CD8-positive, alpha-beta memory T cell (primary cell): ENCODE measurements at regions of chr1 and their contacts with region 1.

Region 1: DNA sequence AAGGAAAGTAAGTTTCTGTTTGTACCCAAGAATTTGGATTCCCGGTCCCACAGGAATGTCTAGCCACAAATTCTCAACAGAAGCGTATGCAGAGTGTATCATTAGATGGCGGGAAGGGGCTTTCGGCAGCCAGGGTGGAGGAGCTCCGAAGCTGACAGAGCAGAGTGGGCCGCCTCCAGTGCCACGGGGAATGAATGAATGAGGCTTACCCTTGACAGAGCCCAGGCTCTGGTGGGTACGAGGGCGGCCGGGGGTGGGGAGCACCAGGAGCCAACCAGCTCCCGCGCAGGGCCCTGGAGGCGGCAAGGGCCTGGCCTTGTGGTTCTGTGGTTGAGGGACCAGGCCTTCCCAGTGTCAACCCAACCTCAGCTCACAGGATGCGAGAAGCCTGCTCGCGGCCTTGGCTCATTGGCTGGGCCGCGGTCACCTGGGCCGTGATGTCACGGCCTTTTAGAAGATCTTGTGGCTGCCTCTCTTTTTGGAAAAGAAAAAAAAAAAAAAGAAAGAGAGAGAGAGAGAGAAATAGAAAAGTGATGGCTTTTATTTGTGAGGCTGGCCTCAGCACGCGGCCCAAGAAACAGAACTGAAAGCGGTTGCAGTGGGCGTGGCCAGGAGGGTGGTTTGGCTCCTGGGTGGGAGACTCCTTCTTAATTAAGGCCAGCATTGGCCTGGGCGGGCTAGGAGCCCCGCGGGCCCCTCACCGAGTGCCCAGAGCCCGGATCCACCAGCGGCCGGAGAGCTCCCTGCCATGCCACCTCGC is 34.9 kb upstream of the RUNX3 start:
- DNase-seq: peak; percentile 82 to 98 (median 93)
- H3K4me3 ChIP-seq: peak overlapping the region; percentile 53
- H3K4me3 Mint-ChIP-seq: peak overlapping the region; percentile 77 to 94 (median 88)
- H3K27ac ChIP-seq: peak overlapping the region; percentile 60
- H3K27ac Mint-ChIP-seq: peak overlapping the region; percentile 91 to 98 (median 95)
- H3K4me1 ChIP-seq: peaks cover 54% of the 10 kb centered on the region
- H3K4me1 Mint-ChIP-seq: peaks cover 65 to 80% (median 69%) of the 10 kb centered on the region in 3 donors
- H3K27me3 ChIP-seq: no peaks in the 10 kb centered on the region
- H3K27me3 Mint-ChIP-seq: peaks cover 0 to 3% of the 10 kb centered on the region in 2 donors

Region 2: DNA sequence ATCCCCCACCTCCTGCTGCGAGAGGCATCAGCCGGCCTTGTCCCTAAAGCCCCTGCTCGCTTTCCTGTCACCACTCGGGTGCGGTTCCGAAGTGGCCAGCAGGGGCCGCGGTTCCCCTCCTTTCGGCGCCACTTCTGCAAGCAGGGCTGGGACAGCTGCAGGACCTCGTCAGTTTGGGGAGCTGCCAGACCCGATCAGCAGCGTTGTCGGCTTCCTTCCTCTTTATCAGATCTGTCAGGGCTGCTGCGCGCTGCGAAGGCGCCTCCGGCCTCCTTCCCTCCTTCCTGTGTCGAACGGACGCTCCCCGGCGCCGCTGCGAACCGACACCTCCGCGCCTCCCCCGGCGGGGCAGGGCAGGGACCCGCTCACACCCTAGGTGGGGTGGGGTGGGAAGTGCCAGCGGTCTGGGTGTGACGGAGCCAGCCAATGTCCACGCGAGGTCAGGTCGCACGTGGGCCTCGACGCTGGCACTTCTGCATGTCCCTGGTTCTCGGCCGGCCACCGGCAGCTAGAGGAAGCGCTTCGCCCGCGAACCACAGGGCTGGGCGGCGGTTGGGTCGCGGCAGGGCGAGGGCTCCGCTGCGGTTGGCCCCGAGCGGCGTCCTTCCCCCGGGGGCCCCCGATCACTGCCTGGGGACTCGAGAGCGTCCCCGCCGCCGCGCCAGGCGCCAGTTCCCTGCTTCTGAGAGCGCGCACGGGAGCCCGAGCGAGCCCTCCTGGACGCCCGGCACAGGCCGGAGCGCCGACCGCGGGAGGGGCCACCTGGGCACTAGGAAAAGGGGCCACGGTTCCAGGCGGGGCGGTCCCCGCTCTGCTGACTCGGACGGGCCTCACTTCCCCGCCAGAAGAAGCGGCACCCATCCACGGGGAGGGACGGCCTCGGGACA is 116.8 kb before region 1 on chr1:
- CTCF ChIA-PET with region 1: interaction called, 13 read pairs
- POLR2A ChIA-PET with region 1: interaction called, 3 read pairs
- DNase-seq: peak; percentile 82 to 95 (median 86)
- H3K4me3 ChIP-seq: peak overlapping the region; percentile 48
- H3K4me3 Mint-ChIP-seq: peak overlapping the region; percentile 66 to 84 (median 74)
- H3K27ac ChIP-seq: peak overlapping the region; percentile 27
- H3K27ac Mint-ChIP-seq: peak overlapping the region; percentile 73 to 95 (median 82)
- H3K4me1 ChIP-seq: peaks cover 4% of the 10 kb centered on the region
- H3K4me1 Mint-ChIP-seq: peaks cover 24 to 37% (median 25%) of the 10 kb centered on the region in 3 donors
- H3K27me3 ChIP-seq: no peaks in the 10 kb centered on the region
- H3K27me3 Mint-ChIP-seq: peaks cover 0 to 1% of the 10 kb centered on the region in 2 donors

Region 3: DNA sequence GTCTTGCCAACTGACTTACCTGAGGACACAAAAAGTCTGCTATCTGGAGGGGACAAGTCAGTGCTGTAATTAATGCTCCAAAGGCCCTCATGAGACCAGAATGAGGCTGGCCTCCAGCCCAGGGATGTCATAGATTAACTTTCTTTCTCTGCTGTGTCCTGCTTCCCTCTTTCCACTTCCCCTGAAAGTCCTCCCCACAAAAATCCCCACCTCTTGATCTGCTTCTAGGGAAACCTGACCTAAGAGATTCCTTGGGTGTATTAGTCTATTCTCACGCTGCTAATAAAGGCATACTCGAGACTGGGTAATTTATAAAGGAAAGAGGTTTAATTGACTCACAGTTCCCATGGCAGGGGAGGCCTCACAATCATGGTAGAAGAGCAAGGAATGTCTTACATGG is 74.1 kb before region 1 on chr1:
- CTCF ChIA-PET with region 1: no interaction called
- POLR2A ChIA-PET with region 1: no interaction called
- DNase-seq: no peak
- H3K4me3 ChIP-seq: no peak overlapping the region
- H3K4me3 Mint-ChIP-seq: peak overlapping the region in 1 of 7 donors; percentile 68
- H3K27ac ChIP-seq: no peak overlapping the region
- H3K27ac Mint-ChIP-seq: peak overlapping the region in 1 of 8 donors; percentile 38
- H3K4me1 ChIP-seq: no peaks in the 10 kb centered on the region
- H3K4me1 Mint-ChIP-seq: peaks cover 2 to 4% (median 3%) of the 10 kb centered on the region in 3 donors
- H3K27me3 ChIP-seq: no peaks in the 10 kb centered on the region
- H3K27me3 Mint-ChIP-seq: peaks cover 0 to 1% of the 10 kb centered on the region in 2 donors

Region 4: GRCh38 chr1:24946861-24947658 is 17.9 kb before region 1 on chr1:
- CTCF ChIA-PET with region 1: interaction called, 34 read pairs
- POLR2A ChIA-PET with region 1: interaction called, 12 read pairs
- DNase-seq: no peak
- H3K4me3 ChIP-seq: no peak overlapping the region
- H3K4me3 Mint-ChIP-seq: peak overlapping the region in 1 of 7 donors; percentile 31
- H3K27ac ChIP-seq: no peak overlapping the region
- H3K27ac Mint-ChIP-seq: peak overlapping the region in 6 of 8 donors; percentile 23 to 78 (median 68)
- H3K4me1 ChIP-seq: peaks cover 9% of the 10 kb centered on the region
- H3K4me1 Mint-ChIP-seq: peaks cover 34 to 81% (median 48%) of the 10 kb centered on the region in 3 donors
- H3K27me3 ChIP-seq: no peaks in the 10 kb centered on the region
- H3K27me3 Mint-ChIP-seq: peaks cover 0 to under 1% of the 10 kb centered on the region in 2 donors

Region 5: GRCh38 chr1:24987875-24988557 is 23.0 kb after region 1 on chr1:
- CTCF ChIA-PET with region 1: interaction called, 55 read pairs
- POLR2A ChIA-PET with region 1: interaction called, 17 read pairs
- DNase-seq: peak in 1 of 5 donors; percentile 30
- H3K4me3 ChIP-seq: no peak overlapping the region
- H3K4me3 Mint-ChIP-seq: peak overlapping the region in 3 of 7 donors; percentile 8 to 58 (median 57)
- H3K27ac ChIP-seq: no peak overlapping the region
- H3K27ac Mint-ChIP-seq: peak overlapping the region in 7 of 8 donors; percentile 32 to 93 (median 68)
- H3K4me1 ChIP-seq: peaks cover 99% of the 10 kb centered on the region
- H3K4me1 Mint-ChIP-seq: peaks cover 88 to 96% (median 94%) of the 10 kb centered on the region in 3 donors
- H3K27me3 ChIP-seq: no peaks in the 10 kb centered on the region
- H3K27me3 Mint-ChIP-seq: peaks cover 0 to 4% of the 10 kb centered on the region in 2 donors

Region 6: DNA sequence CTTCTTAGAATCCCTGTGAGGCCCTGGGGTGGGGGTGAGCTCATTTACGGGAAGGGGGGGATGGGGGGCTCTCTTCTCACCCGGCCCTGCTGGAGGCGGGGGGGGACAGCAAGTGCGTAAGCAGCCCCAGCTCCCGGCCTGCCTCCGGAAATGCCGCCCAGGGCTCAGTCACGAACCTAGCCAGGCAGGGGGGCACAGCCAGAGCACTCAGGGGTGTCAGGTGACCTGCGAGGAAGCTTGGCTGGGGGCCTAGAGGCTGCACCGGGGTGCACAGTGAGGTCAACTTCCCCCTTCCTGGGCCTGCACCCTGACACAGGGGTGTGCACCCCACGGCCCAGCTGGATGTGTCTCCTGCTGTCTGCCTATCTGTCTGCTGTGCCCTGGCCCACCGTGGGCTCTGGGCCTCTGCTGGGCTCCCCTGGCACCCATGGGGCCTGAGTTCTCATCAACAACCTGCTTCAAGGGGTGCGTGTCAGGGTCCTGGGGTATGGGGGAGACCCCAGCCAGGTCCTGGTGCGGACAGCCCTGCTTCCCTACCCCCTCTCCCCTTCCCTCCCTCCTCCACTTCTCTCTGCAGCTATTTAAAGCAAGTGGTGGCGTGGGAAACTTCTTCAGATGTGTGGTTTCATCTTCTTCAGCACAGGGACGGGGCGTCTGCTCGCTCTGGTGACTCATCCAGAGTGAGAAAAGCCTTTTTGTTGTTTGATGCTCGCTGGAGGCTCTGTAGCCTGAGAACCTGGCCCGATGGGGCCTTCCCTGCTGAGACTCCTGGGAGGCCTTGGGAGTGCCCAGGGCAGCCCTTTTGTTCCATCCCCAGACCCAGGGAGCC is 57.6 kb after region 1 on chr1:
- CTCF ChIA-PET with region 1: interaction called, 47 read pairs
- POLR2A ChIA-PET with region 1: interaction called, 36 read pairs
- DNase-seq: peak; percentile 93 to 99 (median 96)
- H3K4me3 ChIP-seq: peak overlapping the region; percentile 58
- H3K4me3 Mint-ChIP-seq: peak overlapping the region; percentile 48 to 84 (median 75)
- H3K27ac ChIP-seq: peak overlapping the region; percentile 97
- H3K27ac Mint-ChIP-seq: peak overlapping the region; percentile 89 to 100 (median 98)
- H3K4me1 ChIP-seq: peaks cover 79% of the 10 kb centered on the region
- H3K4me1 Mint-ChIP-seq: peaks cover 66 to 81% (median 75%) of the 10 kb centered on the region in 3 donors
- H3K27me3 ChIP-seq: no peaks in the 10 kb centered on the region
- H3K27me3 Mint-ChIP-seq: no peaks in the 10 kb centered on the region

Region 7: GRCh38 chr1:25042331-25043227 is 77.6 kb after region 1 on chr1:
- CTCF ChIA-PET with region 1: interaction called, 205 read pairs
- POLR2A ChIA-PET with region 1: interaction called, 12 read pairs
- DNase-seq: peak in 1 of 5 donors; percentile 41
- H3K4me3 ChIP-seq: no peak overlapping the region
- H3K4me3 Mint-ChIP-seq: peak overlapping the region in 1 of 7 donors; percentile 49
- H3K27ac ChIP-seq: no peak overlapping the region
- H3K27ac Mint-ChIP-seq: peak overlapping the region in 2 of 8 donors; percentile 55 to 65
- H3K4me1 ChIP-seq: peaks cover 10% of the 10 kb centered on the region
- H3K4me1 Mint-ChIP-seq: peaks cover 29 to 48% (median 33%) of the 10 kb centered on the region in 3 donors
- H3K27me3 ChIP-seq: no peaks in the 10 kb centered on the region
- H3K27me3 Mint-ChIP-seq: no peaks in the 10 kb centered on the region